Dendritic cell treated with granulocyte-macrophage colony-stimulating factor and Interleukin-4, amounts not matched to agents 40 ng/mL and 50 ng/mL, for 4 days (primary cell): ENCODE measurements at regions of chr2 and their contacts with region 1.

Region 1: GRCh38 chr2:175366815-175367214 is 185.3 kb upstream of the ATP5MC3 start:
- H3K4me3 Mint-ChIP-seq: no peak overlapping the region
- H3K27ac Mint-ChIP-seq: no peak overlapping the region
- H3K4me1 Mint-ChIP-seq: peaks cover 7% of the 10 kb centered on the region
- H3K27me3 Mint-ChIP-seq: peaks cover 21% of the 10 kb centered on the region

Region 2: GRCh38 chr2:174951745-174952144 is 415.1 kb before region 1 on chr2:
- intact Hi-C with region 1: no loop called
- H3K4me3 Mint-ChIP-seq: no peak overlapping the region
- H3K27ac Mint-ChIP-seq: no peak overlapping the region
- H3K4me1 Mint-ChIP-seq: no peaks in the 10 kb centered on the region
- H3K27me3 Mint-ChIP-seq: peaks cover 9% of the 10 kb centered on the region

Region 3: DNA sequence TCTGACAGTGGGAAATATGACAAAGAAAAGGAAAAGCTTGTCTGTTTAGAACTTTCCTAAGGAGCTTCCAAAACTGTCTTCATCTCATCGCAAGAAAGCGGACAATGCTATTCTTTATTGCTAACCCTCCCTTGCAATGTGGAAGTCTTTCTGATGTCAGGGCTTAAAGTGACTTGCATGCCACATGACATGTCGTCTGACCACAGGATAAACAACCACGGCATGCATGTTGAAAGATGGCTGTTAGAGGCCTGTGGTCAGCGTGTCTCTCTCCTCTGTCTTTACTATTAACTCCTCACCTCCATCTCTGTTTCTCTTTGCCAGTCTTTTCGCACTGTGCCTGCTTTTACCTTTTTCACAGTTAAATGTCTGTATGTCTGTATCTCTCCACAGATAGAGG is 245.5 kb after region 1 on chr2:
- intact Hi-C with region 1: no loop called
- H3K4me3 Mint-ChIP-seq: no peak overlapping the region
- H3K27ac Mint-ChIP-seq: no peak overlapping the region
- H3K4me1 Mint-ChIP-seq: no peaks in the 10 kb centered on the region
- H3K27me3 Mint-ChIP-seq: no peaks in the 10 kb centered on the region

Region 4: DNA sequence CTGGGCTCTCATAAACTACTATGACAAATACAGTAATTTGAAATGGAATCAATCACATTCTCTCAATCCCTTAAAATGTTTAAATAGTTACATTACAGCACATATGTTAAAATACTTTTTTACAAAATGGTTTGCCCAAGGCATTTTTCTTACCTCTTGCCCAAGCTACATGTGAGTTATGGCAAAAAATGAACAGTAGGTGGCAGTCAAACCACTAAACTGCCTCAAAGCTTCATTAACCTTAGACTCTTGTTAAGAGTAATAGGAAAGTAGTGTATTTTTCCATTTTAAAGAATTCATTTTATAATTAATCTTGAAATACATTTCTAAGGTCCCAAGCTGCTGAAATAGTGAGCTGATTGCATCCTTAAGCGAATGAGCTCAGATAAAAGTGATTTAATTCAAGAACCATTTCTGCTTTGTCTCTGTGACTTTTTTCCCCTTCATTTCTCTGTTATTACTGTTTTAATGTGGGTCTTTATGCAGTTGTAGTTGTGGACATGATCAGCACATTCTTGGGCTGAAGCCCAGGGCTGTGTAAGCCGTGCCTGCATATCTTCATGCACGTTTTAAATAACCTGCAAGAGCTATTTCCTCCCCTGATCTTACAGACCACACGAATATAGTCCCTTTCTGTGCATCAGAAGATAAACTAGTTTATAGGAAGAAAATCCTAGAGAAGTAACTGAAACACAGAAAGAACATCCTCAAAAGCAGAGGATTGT is 323.5 kb after region 1 on chr2:
- intact Hi-C with region 1: loop called (anchors 2 kb)
- H3K4me3 Mint-ChIP-seq: no peak overlapping the region
- H3K27ac Mint-ChIP-seq: no peak overlapping the region
- H3K4me1 Mint-ChIP-seq: no peaks in the 10 kb centered on the region
- H3K27me3 Mint-ChIP-seq: peaks cover 7% of the 10 kb centered on the region

Region 5: GRCh38 chr2:176088048-176088936 is 721.5 kb after region 1 on chr2:
- intact Hi-C with region 1: loop called (anchors 2 kb)
- H3K4me3 Mint-ChIP-seq: peak overlapping the region; percentile 79
- H3K27ac Mint-ChIP-seq: no peak overlapping the region
- H3K4me1 Mint-ChIP-seq: peaks cover 54% of the 10 kb centered on the region
- H3K27me3 Mint-ChIP-seq: peaks cover 95% of the 10 kb centered on the region